HEK293 (cell line): ENCODE measurements at regions of chr11 and their contacts with region 1.

Region 1: GRCh38 chr11:14907411-14908213 is 15.6 kb upstream of the CYP2R1 start:
- H3K4me3 ChIP-seq: no peak overlapping the region
- H3K27ac ChIP-seq: no peak overlapping the region
- H3K4me1 ChIP-seq: no peaks in the 10 kb centered on the region
- CTCF ChIP-seq: peak; percentile 64

Region 2: DNA sequence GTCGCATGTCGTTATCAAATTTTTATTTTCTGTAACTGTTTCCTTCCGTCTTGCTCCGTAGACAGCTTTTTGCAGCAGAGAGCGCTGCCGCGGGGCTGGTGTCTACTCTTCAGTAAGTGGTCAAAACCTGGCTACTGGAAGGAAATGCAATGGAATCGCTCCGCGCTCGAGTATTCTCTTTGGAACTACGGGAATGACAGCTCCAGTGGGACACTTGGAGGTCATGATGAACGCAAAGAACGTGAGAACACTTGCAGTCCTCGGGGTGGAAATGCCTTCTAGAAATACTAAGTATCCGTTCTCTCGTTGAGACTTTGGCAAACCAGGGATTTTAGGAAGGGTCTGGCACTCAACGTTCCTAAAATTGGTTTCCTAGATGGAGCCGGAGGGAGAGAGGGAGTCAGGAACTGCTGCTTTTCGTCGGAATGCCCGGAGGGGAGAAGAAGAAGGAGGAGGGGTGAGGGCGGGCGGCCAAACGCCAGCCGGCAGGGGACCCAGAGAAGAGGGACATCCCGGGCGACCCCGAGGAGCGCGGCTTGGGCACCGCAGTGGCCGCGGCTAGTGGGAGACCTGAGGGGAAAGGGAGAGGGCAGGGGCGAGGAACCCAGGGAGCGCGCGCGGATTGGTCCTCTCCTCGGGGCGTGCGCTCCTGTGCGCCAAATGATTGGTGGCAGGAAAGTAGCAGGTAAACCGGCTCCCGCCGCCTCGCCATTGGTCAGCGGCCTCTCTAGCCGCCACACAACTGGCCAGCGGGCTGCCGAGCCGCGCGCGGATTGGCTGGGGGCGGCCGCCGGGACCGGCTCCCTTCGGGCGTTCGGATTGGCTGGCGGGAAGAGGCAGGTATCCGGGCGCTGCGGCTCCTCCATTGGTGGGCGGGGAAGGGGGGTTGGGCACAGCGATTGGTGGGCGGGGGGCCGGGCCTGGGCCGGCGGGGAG is 1630.5 kb before region 1 on chr11:
- CTCF ChIA-PET with region 1: no interaction called
- POLR2A ChIA-PET with region 1: no interaction called
- H3K4me3 ChIP-seq: peak overlapping the region; percentile 77
- H3K27ac ChIP-seq: no peak overlapping the region
- H3K4me1 ChIP-seq: no peaks in the 10 kb centered on the region
- CTCF ChIP-seq: no peak

Region 3: DNA sequence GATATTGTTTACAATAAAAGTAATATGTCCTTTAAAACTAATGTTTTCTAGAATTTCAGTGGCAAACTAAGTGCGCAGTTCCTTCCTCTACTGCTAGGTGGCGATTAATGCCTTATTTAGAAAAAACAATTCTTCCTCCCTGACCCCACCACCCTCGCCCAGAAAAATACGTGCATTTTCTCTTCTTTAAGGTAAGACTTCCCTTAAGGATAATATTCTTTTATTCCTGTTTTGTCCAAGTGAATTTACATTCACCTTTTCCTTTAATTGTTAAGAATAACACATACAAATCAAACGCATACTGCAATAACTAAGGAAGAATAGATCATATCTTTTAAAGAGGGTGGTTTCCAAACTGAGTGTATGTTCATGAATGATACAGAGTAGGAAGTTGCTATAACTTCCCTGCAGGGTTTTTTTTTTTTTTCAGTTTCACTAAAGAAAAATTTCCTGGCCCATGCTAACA is 370.4 kb before region 1 on chr11:
- CTCF ChIA-PET with region 1: interaction called, 22 read pairs
- POLR2A ChIA-PET with region 1: no interaction called
- H3K4me3 ChIP-seq: no peak overlapping the region
- H3K27ac ChIP-seq: no peak overlapping the region
- H3K4me1 ChIP-seq: no peaks in the 10 kb centered on the region
- CTCF ChIP-seq: no peak

Region 4: GRCh38 chr11:14789879-14790484 is 117.6 kb before region 1 on chr11:
- CTCF ChIA-PET with region 1: interaction called, 82 read pairs
- POLR2A ChIA-PET with region 1: interaction called, 3 read pairs
- H3K4me3 ChIP-seq: no peak overlapping the region
- H3K27ac ChIP-seq: no peak overlapping the region
- H3K4me1 ChIP-seq: no peaks in the 10 kb centered on the region
- CTCF ChIP-seq: no peak

Region 5: DNA sequence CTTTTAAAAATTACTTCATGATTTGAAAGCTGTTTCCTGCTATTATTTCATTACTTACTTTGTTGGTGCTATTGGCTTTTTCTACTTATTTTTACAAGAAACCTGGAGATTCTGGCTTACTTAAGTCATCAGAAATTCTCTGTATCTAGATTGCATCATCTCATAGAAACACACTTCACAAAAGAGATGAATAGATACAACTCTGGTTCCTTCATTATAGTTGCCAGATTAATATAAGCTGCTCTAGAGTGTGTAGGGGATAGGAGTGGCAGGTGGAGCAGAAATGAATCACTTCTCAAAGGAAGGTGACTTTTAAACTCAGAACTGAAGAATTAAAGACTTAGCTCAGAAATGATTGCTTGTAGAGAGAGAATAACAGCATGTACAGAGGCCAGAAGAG is 35.6 kb before region 1 on chr11:
- CTCF ChIA-PET with region 1: no interaction called
- POLR2A ChIA-PET with region 1: no interaction called
- H3K4me3 ChIP-seq: no peak overlapping the region
- H3K27ac ChIP-seq: no peak overlapping the region
- H3K4me1 ChIP-seq: no peaks in the 10 kb centered on the region
- CTCF ChIP-seq: no peak

Region 6: DNA sequence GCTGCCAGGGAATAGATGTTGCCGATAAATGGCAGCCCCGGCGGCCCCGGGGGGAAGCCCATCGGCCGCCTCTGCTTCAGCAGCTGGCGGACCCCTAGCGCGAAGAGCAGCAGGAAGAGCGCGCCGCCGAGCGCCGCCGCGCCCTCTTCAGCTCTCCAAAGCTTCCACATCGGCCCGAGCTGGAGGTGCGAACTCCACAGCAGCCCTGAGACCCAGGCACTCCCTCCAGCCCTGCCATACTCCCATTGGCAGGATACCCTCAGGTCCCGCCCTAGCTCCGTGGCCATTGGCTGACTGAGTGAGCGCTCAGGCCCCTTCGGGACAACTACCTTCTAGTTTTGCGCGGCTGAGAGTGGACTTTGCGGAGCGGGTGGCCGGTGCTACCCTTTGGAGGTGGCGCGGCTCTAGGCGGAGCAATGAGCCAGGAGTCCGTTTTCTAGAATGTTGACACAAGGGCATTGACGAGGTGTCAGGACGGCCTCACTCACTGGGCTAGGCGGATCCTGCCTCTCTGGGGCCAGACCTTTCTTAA is 15.5 kb before region 1 on chr11 and contains the start of gene CYP2R1:
- CTCF ChIA-PET with region 1: interaction called, 18 read pairs
- POLR2A ChIA-PET with region 1: interaction called, 8 read pairs
- H3K4me3 ChIP-seq: peak within 1 kb of the TSS; percentile 62
- H3K27ac ChIP-seq: peak within 1 kb of the TSS; percentile 51; the same call in 1 of the 2 replicates
- H3K4me1 ChIP-seq: no peaks in the 10 kb centered on the region
- CTCF ChIP-seq: no peak; the same call in 1 of the 2 replicates

Region 7: DNA sequence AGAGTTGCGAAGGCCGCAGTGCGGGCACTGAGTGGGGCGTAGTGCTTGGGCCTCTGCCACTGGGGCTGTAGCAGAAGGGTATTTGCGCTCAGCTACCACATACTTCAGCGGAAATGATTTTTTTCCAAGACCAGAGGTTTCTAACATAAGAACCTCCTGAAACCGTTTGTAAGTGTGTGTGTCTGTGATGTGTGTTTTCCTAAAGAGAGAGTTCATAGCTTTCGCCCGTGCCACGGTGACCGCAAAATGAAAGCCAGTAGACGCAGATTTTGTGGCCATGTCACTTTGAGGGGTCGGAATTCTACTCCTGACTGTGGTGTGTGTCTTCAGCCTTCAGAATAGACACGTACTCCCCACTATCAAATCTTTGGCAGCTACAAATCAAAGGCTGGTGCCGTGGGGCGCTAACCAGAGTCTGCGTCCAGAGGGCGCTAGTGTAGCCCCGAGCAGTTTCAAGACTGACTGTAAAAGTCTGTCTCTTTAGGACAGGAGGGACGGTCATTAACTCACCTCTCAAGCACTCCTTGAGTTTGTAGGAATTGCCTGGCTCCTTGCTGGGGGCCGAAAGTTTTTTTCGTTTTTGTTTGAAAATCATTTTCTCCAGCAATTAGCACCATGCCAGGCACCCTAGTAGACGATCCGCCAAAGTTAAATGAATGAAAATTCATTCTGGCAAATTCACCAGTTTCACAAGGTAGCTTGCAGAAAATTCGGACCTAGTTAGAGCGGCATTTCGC is 67.1 kb after region 1 on chr11:
- CTCF ChIA-PET with region 1: interaction called, 35 read pairs
- POLR2A ChIA-PET with region 1: no interaction called
- H3K4me3 ChIP-seq: peak overlapping the region; percentile 46
- H3K27ac ChIP-seq: no peak overlapping the region; the same call in 1 of the 2 replicates
- H3K4me1 ChIP-seq: no peaks in the 10 kb centered on the region
- CTCF ChIP-seq: peak; percentile 34; the same call in 1 of the 2 replicates

Region 8: DNA sequence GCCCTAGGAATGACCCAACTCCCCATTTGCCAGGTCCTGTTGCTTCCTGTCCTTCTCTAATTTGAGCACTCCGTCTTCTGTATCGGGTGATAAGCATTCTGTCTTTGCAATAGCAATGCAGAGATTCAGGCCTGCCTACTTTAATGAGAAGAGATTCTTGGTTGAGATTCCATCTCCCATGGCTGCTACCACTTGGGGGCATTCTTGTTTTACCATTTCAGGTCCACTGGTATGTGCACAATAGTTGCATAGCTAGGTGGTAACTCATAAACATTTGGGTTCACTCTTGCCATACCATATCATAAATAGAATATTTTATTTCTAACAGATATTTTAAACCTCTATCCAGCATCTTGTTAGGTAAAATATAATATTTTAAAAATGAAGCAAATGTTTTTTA is 131.4 kb after region 1 on chr11:
- CTCF ChIA-PET with region 1: interaction called, 24 read pairs
- POLR2A ChIA-PET with region 1: no interaction called
- H3K4me3 ChIP-seq: no peak overlapping the region
- H3K27ac ChIP-seq: no peak overlapping the region
- H3K4me1 ChIP-seq: no peaks in the 10 kb centered on the region
- CTCF ChIP-seq: no peak

Region 9: DNA sequence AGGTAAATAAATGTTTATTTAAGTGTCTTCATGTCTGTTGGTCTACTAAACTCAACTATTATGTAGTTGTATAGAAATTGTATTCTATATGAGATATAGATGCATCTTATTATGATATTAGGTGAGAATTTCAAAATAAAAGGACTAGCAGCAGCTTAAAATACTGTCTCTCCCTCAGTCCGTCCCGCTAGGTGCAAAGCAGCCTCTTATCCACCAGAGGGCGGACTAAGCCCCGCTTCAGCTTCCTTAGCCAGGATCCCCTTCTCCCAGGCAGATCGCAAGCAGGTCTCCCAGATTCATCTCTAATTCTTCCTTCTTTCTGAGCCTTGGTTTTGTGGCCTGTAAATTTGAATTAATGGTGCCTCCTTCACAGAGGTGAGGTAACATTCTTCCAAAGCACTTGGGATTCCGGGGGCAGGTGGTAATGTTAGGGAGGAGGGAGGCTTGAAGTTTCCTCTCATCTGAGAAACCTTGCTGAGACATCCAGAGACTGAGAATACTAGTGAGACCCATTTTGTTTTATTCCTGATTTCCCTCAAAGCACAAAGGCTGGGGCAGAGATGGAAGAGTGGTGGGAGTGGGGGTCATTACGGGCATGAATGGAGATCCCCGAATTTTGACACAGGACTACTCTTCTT is 193.6 kb after region 1 on chr11:
- CTCF ChIA-PET with region 1: interaction called, 30 read pairs
- POLR2A ChIA-PET with region 1: no interaction called
- H3K4me3 ChIP-seq: no peak overlapping the region
- H3K27ac ChIP-seq: no peak overlapping the region
- H3K4me1 ChIP-seq: no peaks in the 10 kb centered on the region
- CTCF ChIP-seq: peak; percentile 27; the same call in 1 of the 2 replicates